AG04450 (cell line): ENCODE measurements at regions of chr11 and their contacts with region 1.

Region 1: DNA sequence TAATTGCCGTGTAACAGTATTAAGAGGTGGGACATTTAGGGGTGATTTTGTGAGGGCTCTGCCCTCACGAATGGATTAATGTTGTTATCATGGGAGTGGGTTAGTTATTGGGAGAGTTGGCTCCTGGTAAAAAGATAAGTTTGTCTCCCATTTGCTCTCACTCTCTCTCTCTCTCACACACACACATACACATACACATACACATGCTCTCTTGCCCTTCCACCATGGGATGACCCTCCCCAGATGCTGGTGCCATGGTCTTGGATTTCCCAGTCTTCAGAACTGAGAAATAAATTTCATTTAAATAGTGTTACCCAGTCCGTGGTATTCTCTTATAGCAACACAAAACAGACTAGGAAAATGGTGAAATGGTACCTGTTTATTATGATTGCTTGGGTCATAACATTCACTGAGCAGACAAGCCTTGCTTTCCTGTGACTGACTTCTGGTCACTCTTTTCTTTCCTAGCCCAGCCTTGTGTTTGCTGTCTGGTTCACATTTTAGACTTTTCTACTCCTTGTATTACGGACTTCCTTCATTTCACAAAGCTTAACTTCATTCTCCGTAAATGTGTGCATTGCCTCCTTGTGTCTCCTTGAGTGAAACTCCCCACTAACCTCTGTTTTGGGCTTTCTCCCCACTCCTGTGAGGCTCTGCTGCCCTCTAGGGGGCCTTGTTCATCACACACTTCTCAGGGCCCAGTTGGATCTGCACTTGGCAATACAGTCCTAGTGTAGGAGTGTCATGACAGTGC is 206.5 kb upstream of the CTSC start:
- DNase-seq: peak; percentile 90
- H3K4me3 ChIP-seq: no peak overlapping the region
- H3K27ac ChIP-seq: no peak overlapping the region
- H3K27me3 ChIP-seq: no peaks in the 10 kb centered on the region
- CTCF ChIP-seq: peak; percentile 100

Region 2: DNA sequence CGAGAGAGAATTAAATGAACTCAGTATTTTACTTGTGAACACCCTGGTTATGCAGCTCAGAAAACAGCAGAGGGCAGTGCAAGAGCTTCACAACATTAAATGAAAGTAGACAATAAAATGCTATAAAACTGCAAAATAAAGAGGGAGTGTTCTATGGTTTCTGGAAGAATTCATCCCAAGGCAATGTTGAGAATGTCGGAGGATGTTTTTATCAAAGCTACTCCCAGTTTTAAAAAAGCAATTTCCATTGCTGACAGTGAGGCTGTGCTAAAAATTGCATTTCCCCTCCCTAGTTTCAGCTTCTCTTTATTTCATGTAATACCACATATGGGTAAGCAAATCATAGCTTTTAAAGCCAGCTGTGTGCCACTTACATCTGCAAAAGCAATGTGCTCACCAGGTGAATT is 665.7 kb before region 1 on chr11:
- CTCF ChIA-PET with region 1: interaction called, 13 read pairs
- POLR2A ChIA-PET with region 1: no interaction called
- DNase-seq: peak; percentile 16
- H3K4me3 ChIP-seq: no peak overlapping the region
- H3K27ac ChIP-seq: no peak overlapping the region
- H3K27me3 ChIP-seq: no peaks in the 10 kb centered on the region
- CTCF ChIP-seq: peak; percentile 61

Region 3: DNA sequence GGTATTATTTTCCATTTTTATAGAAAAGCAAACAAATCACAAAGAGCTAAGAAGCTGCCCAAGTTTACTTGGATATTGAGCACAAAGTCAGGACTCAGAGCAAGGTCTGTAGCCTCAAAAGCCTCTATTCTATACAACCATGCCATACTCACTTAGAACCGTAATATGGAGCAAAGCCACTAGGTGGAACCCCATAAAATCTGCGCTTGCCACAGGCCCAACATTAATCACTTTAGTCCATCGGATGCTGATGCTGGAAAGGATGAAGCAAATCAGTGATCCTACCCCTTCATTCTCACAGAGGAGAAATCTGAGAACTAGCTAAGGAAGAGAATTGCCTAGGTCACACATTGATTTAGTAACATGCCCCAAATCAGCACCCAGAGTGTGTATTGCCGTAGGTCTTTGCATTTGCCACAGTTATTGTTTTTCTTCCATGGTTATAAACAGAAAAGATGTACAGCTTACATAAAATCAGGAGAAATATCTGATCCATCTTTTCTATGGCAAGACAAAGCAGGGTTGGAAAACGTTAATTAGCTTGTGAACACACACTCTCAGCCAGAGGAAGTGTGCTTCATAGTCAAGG is 312.1 kb before region 1 on chr11:
- CTCF ChIA-PET with region 1: interaction called, 35 read pairs
- POLR2A ChIA-PET with region 1: no interaction called
- DNase-seq: peak; percentile 3
- H3K4me3 ChIP-seq: no peak overlapping the region
- H3K27ac ChIP-seq: no peak overlapping the region
- H3K27me3 ChIP-seq: no peaks in the 10 kb centered on the region
- CTCF ChIP-seq: peak; percentile 76

Region 4: DNA sequence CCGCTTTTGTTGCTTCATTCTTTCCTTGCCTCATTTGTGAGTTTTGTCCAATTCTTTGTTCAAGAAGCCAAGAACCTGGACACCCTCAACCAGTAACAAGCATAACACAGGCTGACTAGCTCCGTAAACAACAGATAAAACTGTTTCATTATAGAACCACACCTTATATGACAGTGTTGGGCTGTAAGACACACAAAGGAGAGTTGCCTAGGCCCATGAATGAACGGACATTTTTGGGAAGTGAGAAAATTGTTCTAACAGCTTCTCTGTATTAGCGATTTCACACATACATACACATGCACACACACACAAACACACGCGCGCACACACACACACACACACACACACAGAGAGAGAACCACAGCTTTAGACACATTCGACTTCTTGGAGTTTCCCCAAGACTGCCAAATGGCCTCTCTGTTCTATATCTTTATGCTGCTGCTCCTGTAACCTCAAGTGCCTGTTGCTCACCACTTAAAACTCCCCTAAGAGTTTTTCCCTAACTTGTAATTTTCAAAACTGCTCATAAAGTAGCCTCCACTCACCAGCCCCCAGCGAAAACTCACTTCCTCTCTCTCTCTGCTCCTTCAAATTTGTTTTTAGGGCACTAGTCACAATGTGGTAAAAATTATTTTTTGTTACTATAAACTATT is 242.5 kb before region 1 on chr11:
- CTCF ChIA-PET with region 1: interaction called, 14 read pairs
- POLR2A ChIA-PET with region 1: no interaction called
- DNase-seq: no peak
- H3K4me3 ChIP-seq: no peak overlapping the region
- H3K27ac ChIP-seq: no peak overlapping the region
- H3K27me3 ChIP-seq: no peaks in the 10 kb centered on the region
- CTCF ChIP-seq: no peak

Region 5: GRCh38 chr11:88375927-88376470 is 168.1 kb before region 1 on chr11:
- CTCF ChIA-PET with region 1: interaction called, 12 read pairs
- POLR2A ChIA-PET with region 1: no interaction called
- DNase-seq: no peak
- H3K4me3 ChIP-seq: no peak overlapping the region
- H3K27ac ChIP-seq: no peak overlapping the region
- H3K27me3 ChIP-seq: no peaks in the 10 kb centered on the region
- CTCF ChIP-seq: no peak

Region 6: DNA sequence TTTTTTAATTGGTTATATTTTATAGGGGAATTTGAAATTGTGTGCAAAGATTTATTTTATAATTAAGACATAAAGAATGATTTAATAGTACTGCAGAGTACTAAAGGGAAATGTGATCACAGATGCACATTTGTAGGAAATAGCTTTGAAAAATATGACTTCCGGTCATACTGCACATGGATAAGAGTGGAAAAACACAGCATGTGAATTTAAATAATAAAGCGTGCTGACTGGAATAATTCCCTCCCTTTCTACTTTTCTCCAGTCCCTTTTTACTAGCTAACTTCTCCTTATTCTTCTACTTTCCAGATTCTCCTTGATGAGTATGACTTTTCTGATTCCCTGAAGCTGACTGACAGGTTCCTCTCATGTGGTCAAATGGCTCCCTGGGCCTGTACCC is 31.8 kb after region 1 on chr11:
- CTCF ChIA-PET with region 1: no interaction called
- POLR2A ChIA-PET with region 1: no interaction called
- DNase-seq: no peak
- H3K4me3 ChIP-seq: no peak overlapping the region
- H3K27ac ChIP-seq: no peak overlapping the region
- H3K27me3 ChIP-seq: no peaks in the 10 kb centered on the region
- CTCF ChIP-seq: no peak

Region 7: DNA sequence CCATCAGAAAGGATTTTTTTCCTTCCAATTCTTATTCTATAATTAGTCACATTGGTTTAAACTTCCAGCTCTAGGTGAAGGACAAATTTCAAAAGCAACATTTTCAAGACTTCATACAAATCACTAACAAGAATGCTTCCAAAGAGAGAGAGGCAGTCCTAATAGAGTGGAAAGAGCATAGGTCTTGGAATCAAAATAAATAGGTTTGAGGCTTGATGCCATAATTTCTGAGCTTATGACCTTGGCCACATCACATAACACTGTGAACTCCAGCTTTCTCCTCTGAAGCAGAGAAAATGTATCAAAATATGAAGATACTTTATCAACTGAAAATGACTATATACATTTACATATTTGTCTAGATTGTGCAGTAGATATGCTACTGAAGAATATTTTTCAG is 274.9 kb after region 1 on chr11:
- CTCF ChIA-PET with region 1: no interaction called
- POLR2A ChIA-PET with region 1: no interaction called
- DNase-seq: no peak
- H3K4me3 ChIP-seq: no peak overlapping the region
- H3K27ac ChIP-seq: no peak overlapping the region
- H3K27me3 ChIP-seq: no peaks in the 10 kb centered on the region
- CTCF ChIP-seq: no peak